MCF 10A (cell line): ENCODE measurements at regions of chr3 and their contacts with region 1.

Region 1: DNA sequence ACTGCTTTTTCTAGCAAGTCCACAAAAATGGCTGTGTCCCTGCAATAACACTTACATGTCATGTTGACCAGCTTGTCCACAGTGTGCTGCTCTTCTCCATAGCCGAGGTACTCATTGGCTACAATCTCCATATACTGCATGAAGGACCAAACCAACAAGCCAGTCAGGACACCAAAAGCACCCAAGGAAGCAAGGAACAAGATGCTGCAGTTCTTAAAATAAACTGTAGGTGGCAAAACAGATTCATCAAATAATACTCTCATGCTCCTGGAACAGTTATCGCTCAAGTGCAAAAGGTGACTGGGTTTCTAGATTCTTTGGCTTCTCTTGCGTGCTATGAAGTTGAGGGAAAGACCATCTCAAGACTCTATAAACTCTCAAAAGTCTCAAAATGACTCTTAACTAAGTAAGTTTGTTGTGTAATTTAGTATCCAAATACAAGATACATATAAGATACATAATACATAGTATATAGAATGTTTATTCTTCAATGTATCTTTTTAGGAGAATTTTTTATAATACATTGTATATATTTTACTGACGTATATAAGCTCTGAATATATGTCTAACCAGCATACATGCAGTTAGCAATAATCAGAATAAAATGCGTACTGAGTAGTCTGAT is 57.0 kb downstream of the NEK10 start:
- DNase-seq: peak; percentile 82
- H3K4me3 Mint-ChIP-seq: no peak overlapping the region
- H3K27ac Mint-ChIP-seq: peak overlapping the region; percentile 37
- H3K4me1 Mint-ChIP-seq: peaks cover 13% of the 10 kb centered on the region
- H3K27me3 Mint-ChIP-seq: no peaks in the 10 kb centered on the region
- CTCF ChIP-seq: peak; percentile 62

Region 2: DNA sequence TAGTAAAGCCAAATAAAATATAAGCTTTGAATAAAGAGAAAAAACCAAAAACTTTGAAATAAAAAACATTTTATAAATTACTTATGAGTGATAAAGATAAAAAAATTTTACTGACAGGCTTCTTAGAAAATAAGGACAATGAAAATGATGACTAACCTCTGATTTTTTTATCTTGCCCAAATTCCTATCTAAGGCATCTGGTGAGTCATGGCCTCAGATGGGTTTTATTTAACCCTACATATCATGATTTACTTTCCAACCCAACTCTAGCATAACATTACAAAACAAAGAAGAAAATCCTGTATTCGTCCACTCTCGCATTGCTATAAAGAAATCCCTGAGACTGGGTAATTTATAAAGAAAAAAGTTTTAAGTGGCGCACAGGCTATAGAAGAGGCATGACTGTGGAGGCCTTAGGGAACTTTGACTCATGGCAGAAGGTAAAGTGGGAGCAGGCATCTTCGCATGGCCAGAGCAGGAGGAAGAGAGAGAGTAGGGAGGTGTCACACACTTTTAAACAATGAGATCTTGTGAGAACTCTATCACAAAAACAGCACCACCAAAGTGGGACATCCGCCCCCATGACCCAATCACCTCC is 95.1 kb before region 1 on chr3:
- CTCF ChIA-PET with region 1: no interaction called
- POLR2A ChIA-PET with region 1: no interaction called
- intact Hi-C with region 1: no loop called
- DNase-seq: peak; percentile 37
- H3K4me3 Mint-ChIP-seq: no peak overlapping the region
- H3K27ac Mint-ChIP-seq: peak overlapping the region; percentile 40
- H3K4me1 Mint-ChIP-seq: peaks cover 6% of the 10 kb centered on the region
- H3K27me3 Mint-ChIP-seq: no peaks in the 10 kb centered on the region
- CTCF ChIP-seq: no peak

Region 3: DNA sequence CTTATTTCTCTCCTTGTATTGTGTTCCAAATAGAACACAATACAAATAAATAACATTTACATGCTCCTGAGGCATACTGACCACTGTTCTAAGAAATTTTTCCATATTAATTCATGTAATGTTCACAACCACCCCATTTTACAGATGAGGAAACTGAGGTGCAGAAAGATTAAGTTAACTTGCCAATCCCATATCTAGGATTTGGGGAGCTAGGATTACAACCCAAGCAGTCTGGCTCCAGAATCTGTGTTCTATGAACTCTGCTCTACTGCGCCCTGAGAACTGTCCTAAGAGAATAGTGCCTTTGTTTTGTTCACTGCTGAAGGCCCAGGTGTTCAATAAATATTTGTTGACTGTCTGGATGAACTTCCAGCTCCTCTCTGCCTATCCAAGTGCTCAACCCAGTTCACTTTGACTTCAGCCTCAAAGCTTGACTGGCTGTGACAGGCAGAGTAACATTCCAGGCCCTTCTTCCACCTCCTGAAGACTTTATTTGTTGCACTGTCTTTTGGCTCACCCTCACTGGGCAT is 54.0 kb after region 1 on chr3:
- CTCF ChIA-PET with region 1: interaction called, 11 read pairs
- POLR2A ChIA-PET with region 1: no interaction called
- intact Hi-C with region 1: no loop called
- DNase-seq: no peak
- H3K4me3 Mint-ChIP-seq: no peak overlapping the region
- H3K27ac Mint-ChIP-seq: no peak overlapping the region
- H3K4me1 Mint-ChIP-seq: peaks cover 13% of the 10 kb centered on the region
- H3K27me3 Mint-ChIP-seq: no peaks in the 10 kb centered on the region
- CTCF ChIP-seq: no peak